Activated CD4-positive, alpha-beta memory T cell treated with anti-CD3 and anti-CD28 coated beads, Interleukin-2, amount 10 ng/mL, durations not matched to agents 7 days and 5 days (primary cell): ENCODE measurements at regions of chr17 and their contacts with region 1.

Region 1: GRCh38 chr17:59435238-59435637 is 103.8 kb downstream of the YPEL2 start:
- DNase-seq: no peak
- H3K4me3 Mint-ChIP-seq: peak overlapping the region; percentile 40
- H3K27ac Mint-ChIP-seq: peak overlapping the region; percentile 83
- H3K4me1 Mint-ChIP-seq: peaks cover 68% of the 10 kb centered on the region
- H3K27me3 Mint-ChIP-seq: no peaks in the 10 kb centered on the region

Region 2: DNA sequence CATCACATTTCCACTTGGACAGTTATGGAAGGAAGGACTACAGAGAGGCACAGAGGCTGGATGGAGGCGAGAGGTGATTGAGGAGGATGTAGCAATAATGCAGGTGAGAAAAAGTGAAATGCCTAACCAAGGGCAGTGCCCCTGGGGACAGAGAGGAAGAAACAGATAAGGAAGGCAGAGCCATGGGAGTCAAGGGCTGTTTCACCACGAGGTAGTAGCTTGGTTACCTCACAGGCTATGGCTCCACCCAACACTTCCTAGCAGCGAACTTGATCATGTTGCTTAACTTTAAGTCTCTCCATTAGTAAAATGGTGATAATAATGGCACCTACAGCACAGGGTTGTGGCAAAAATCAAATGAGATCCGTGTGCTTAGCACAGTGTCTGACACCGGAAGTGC is 19.8 kb before region 1 on chr17:
- CTCF ChIA-PET with region 1: interaction called, 8 read pairs
- POLR2A ChIA-PET with region 1: interaction called, 10 read pairs
- DNase-seq: no peak
- H3K4me3 Mint-ChIP-seq: no peak overlapping the region
- H3K27ac Mint-ChIP-seq: peak overlapping the region; percentile 5
- H3K4me1 Mint-ChIP-seq: peaks cover 34% of the 10 kb centered on the region
- H3K27me3 Mint-ChIP-seq: no peaks in the 10 kb centered on the region

Region 3: DNA sequence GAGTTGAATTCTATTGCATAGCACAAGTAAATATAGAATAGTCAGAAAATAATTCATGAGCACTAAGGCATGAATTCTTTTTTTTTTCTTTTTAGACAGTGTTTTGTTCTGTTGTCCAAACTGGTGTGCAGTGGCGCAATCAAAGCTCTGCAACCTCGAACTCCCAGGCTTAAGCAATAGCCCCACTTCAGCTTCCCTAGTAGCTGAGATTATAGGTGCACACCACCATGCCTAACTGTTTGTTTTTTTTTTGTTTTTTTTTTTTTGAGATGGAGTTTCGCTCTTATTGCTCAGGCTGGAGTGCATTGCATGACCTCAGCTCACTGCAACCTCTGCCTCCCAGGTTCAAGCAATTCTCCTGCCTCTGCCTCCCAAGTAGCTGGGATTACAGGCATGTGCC is 440.9 kb after region 1 on chr17:
- CTCF ChIA-PET with region 1: no interaction called
- POLR2A ChIA-PET with region 1: no interaction called
- DNase-seq: no peak
- H3K4me3 Mint-ChIP-seq: no peak overlapping the region
- H3K27ac Mint-ChIP-seq: no peak overlapping the region
- H3K4me1 Mint-ChIP-seq: peaks cover 2% of the 10 kb centered on the region
- H3K27me3 Mint-ChIP-seq: no peaks in the 10 kb centered on the region